ENCODE measurements at regions of chr13 and their contacts with region 1.

Region 1: DNA sequence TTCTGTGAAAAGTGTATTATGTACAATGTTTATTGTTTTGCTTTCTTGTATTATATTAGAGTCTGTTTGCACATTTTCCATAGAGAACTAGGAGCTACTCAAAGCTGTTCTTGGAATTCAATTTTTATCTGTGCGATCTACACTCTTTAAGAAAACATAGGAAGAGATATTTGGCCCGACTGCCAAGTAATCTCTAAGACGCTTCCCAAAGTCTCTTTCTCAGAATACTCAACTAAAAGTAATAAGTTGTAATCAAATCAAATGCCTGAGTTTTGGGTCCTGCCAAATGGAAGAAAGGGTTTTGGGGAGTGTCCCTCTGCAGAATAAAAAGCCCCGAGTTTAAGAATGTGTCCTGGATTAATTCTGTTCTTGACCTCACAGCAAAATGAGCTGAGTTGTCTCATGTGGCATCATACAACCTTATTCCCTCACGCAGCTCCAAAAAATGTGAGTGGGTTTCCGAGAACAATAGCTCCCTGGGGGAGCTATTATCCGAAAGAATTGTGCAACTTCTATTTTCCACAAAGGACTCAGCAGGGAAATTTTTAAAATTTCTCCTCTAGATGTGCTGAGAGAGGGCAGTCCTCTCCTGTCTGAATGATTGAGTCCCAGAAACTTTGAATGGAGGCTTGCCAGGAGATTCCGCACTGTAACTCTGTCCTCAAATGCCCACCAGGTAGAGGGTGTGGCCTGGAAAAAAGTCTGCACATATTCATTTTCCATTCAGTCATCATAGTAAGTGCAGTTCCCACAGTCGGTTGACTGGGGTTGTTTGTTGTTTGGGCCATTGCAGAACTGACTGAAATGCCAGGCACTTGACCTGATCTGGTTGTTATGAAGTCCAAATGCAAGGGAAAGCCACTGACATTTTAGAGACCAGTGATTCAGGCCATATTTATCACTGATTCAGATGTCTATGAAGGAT is 280.0 kb upstream of the SOX21 start:
- DNase-seq: no peak
- ATAC-seq: no peak
- H3K4me3 ChIP-seq: no peak overlapping the region
- H3K27ac ChIP-seq: no peak overlapping the region
- H3K4me1 ChIP-seq: no peaks in the 10 kb centered on the region
- H3K27me3 ChIP-seq: peaks cover 0 to 2% (median 0%) of the 10 kb centered on the region in 3 donors
- CTCF ChIP-seq: no peak

Region 2: DNA sequence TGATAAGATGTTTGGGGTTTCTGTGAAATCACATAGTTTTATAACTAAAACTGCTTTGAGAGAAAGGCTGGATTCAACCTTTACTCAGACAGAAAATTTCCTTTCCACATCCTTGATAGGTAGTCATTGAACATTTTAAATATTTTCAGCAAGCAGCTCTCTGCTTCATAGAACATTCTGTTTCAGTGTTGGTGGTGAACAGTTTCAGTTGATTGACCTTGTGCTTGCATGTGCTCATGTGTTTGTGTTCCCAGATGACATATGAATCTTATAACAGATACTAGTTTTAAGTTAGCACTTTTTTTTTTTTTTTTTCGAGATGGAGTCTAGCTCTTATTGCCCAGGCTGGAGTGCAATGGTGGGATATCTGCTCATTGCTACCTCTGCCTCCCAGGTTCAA is 1387.7 kb after region 1 on chr13:
- intact Hi-C with region 1: loop called in 1 of 2 experiments (anchors 10 kb)
- DNase-seq: no peak
- ATAC-seq: no peak
- H3K4me3 ChIP-seq: no peak overlapping the region
- H3K27ac ChIP-seq: no peak overlapping the region
- H3K4me1 ChIP-seq: no peaks in the 10 kb centered on the region
- H3K27me3 ChIP-seq: no peaks in the 10 kb centered on the region
- CTCF ChIP-seq: no peak

Measured in psoas muscle (tissue), 8 donors.